Activated naive CD4-positive, alpha-beta T cell treated with anti-CD3 and anti-CD28 coated beads for 36 hours (primary cell): ENCODE measurements at regions of chr4 and their contacts with region 1.

Region 1: GRCh38 chr4:168514249-168514852 is 17.5 kb downstream of the PALLD start:
- DNase-seq: no peak
- H3K4me3 Mint-ChIP-seq: no peak overlapping the region
- H3K27ac Mint-ChIP-seq: no peak overlapping the region
- H3K4me1 Mint-ChIP-seq: peaks cover 32% of the 10 kb centered on the region
- H3K27me3 Mint-ChIP-seq: no peaks in the 10 kb centered on the region

Region 2: DNA sequence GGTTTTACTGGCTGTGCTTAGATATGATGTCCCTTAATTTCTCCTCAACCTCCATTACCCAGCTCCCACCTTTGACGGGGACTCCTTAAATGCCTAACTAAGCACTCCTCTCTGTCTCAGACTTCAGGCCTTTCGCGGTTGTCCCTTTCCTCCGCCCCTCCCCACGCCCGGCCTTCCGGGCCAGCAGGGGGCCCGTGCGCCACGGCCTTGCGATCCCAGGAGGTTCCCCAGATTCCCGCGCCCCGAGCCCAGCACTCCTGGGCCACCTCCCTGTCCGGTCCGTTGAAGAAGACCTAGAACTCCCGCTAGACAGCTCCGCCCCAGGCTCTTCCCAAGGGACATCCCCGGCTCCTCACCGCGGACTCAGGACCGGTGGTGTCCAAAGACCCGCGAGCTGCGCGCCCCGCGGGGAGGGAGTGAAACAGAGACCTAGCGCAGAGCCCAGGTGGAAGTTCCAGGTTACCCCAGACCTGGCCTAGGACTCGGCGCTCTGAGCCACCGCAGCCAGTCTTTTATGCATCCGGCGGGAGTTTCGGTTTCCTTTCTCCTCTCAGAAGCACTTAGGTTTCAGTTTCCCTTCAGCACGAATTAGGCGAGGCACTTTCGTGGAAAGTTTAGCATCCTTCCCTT is 196.0 kb before region 1 on chr4 and contains the start of gene DDX60:
- CTCF ChIA-PET with region 1: no interaction called
- intact Hi-C with region 1: loop called (anchors 1 kb)
- DNase-seq: peak; percentile 90
- H3K4me3 Mint-ChIP-seq: peak within 1 kb of the TSS; percentile 85
- H3K27ac Mint-ChIP-seq: peak within 1 kb of the TSS; percentile 89
- H3K4me1 Mint-ChIP-seq: peaks cover 31% of the 10 kb centered on the region
- H3K27me3 Mint-ChIP-seq: no peaks in the 10 kb centered on the region
- total RNA-seq, gene DDX60: 26.8 to 28.2 TPM

Region 3: GRCh38 chr4:168503652-168504362 is 10.5 kb before region 1 on chr4:
- CTCF ChIA-PET with region 1: no interaction called
- intact Hi-C with region 1: no loop called
- DNase-seq: peak; percentile 25
- H3K4me3 Mint-ChIP-seq: no peak overlapping the region
- H3K27ac Mint-ChIP-seq: no peak overlapping the region
- H3K4me1 Mint-ChIP-seq: peaks cover 14% of the 10 kb centered on the region
- H3K27me3 Mint-ChIP-seq: peaks cover 2% of the 10 kb centered on the region

Region 4: GRCh38 chr4:168540086-168540865 is 25.9 kb after region 1 on chr4:
- CTCF ChIA-PET with region 1: interaction called, 3 read pairs
- intact Hi-C with region 1: loop called (anchors 1 kb)
- DNase-seq: peak; percentile 31
- H3K4me3 Mint-ChIP-seq: no peak overlapping the region
- H3K27ac Mint-ChIP-seq: no peak overlapping the region
- H3K4me1 Mint-ChIP-seq: peaks cover 9% of the 10 kb centered on the region
- H3K27me3 Mint-ChIP-seq: peaks cover 7% of the 10 kb centered on the region

Region 5: GRCh38 chr4:168710353-168710946 is 196.1 kb after region 1 on chr4:
- CTCF ChIA-PET with region 1: no interaction called
- intact Hi-C with region 1: loop called (anchors 5 kb)
- DNase-seq: peak; percentile 35
- H3K4me3 Mint-ChIP-seq: no peak overlapping the region
- H3K27ac Mint-ChIP-seq: no peak overlapping the region
- H3K4me1 Mint-ChIP-seq: peaks cover 10% of the 10 kb centered on the region
- H3K27me3 Mint-ChIP-seq: no peaks in the 10 kb centered on the region

Region 6: DNA sequence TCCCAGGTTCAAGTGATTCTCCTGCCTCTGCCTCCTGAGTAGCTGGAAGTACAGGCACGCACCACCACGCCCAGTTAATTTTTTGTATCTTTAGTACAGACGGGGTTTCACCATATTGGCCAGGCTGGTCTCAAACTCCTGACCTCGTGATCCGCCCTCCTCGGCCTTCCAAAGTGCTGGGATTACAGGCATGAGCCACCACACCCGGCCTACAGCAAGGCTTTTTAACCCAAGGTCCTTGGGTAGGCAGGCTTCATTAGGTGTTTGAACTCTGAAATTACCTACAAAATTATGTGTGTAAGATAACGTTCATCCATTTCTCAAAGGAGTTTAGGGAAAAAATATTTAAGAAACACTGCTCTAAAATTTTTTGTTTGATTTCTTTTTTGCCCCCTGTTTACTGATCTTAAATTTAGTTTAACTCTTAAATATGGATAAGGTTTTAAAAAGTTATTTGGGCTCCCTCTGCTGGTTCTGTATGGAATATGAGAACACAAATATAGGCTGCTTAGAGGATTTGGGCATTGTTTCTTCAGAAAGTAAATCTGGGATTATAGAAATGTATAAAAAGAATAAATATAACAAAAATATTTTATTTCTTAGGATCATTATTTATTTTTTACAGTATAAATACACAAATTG is 402.9 kb after region 1 on chr4:
- CTCF ChIA-PET with region 1: interaction called, 8 read pairs
- intact Hi-C with region 1: loop called (anchors 1 kb)
- DNase-seq: no peak
- H3K4me3 Mint-ChIP-seq: no peak overlapping the region
- H3K27ac Mint-ChIP-seq: no peak overlapping the region
- H3K4me1 Mint-ChIP-seq: no peaks in the 10 kb centered on the region
- H3K27me3 Mint-ChIP-seq: no peaks in the 10 kb centered on the region

Region 7: DNA sequence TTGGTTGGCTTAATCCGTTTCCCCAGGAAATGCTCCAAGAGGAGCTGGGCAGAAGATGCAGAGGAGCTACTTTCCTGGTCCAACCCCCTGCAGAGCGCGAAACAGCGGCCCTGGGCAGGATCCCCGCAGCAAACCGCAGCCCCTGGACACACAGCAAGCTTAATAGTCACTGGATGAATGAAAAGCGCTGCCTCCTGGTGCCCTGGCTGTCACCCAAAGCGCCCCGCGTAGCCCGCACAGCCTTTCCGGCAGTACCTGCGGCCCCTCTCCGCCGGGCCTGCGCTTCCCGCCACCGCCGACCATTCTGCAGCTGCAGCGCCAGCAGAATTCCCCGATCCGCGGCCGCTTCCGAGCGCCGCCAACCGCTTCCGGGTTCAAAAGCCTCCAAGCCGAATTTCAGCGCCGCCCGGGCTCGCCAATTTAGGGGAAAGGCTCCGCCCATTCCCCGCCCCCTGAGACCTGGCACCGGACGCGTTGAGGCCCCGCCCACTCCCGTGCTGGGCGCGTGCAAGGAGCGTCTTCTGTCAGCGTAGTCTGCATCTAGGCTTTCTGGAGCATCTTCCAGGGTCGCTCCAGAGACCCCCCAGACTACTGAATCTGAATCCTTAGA is 1243.3 kb after region 1 on chr4 and contains the start of gene HPF1:
- CTCF ChIA-PET with region 1: no interaction called
- intact Hi-C with region 1: loop called (anchors 1 kb)
- DNase-seq: peak; percentile 97
- H3K4me3 Mint-ChIP-seq: peak within 1 kb of the TSS; percentile 83
- H3K27ac Mint-ChIP-seq: peak within 1 kb of the TSS; percentile 81
- H3K4me1 Mint-ChIP-seq: peaks cover 21% of the 10 kb centered on the region
- H3K27me3 Mint-ChIP-seq: no peaks in the 10 kb centered on the region
- total RNA-seq, gene HPF1: 35.7 to 36.6 TPM